Caco-2 (cell line): ENCODE measurements at regions of chr2 and their contacts with region 1.

Region 1: DNA sequence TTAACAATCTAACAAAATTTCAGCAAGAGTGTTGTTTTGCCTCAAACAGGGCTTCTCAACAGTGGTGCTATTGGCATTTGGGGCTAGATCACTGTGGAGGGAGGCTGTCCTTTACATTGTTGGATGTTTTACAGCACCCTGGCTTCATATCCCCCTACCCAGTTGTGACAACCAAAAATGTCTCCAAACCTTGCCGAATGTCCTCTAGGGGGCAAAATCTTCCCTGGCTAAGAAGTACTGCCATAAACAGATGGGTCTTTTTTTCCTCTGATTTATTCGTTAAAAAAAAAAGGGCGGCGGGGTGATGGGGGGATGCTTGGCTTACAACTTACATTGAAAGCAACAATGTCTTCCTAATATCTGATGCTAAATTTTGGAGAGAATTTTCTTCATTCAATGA is 207.6 kb upstream of the CCDC150 start:
- DNase-seq: peak in 1 of 2 experiments; percentile 40
- H3K4me3 ChIP-seq: no peak overlapping the region
- H3K4me3 Mint-ChIP-seq: no peak overlapping the region
- H3K27ac Mint-ChIP-seq: no peak overlapping the region
- H3K4me1 ChIP-seq: no peaks in the 10 kb centered on the region
- H3K4me1 Mint-ChIP-seq: no peaks in the 10 kb centered on the region
- H3K27me3 ChIP-seq: no peaks in the 10 kb centered on the region; the same call in 1 of the 2 replicates
- H3K27me3 Mint-ChIP-seq: peaks cover 1% of the 10 kb centered on the region
- CTCF ChIP-seq: peak; percentile 31 to 52

Region 2: GRCh38 chr2:196750982-196751635 is 319.2 kb after region 1 on chr2:
- CTCF ChIA-PET with region 1: no interaction called
- POLR2A ChIA-PET with region 1: no interaction called
- intact Hi-C with region 1: loop called (anchors 10 kb)
- DNase-seq: peak; percentile 66 to 68
- H3K4me3 ChIP-seq: no peak overlapping the region
- H3K4me3 Mint-ChIP-seq: no peak overlapping the region
- H3K27ac Mint-ChIP-seq: peak overlapping the region; percentile 53
- H3K4me1 ChIP-seq: peaks cover 23% of the 10 kb centered on the region
- H3K4me1 Mint-ChIP-seq: peaks cover 14% of the 10 kb centered on the region
- H3K27me3 ChIP-seq: no peaks in the 10 kb centered on the region
- H3K27me3 Mint-ChIP-seq: no peaks in the 10 kb centered on the region
- CTCF ChIP-seq: peak; percentile 63 to 78